ENCODE measurements at regions of chr19 and their contacts with region 1.

Region 1: GRCh38 chr19:2983351-2984195 is 6.2 kb downstream of the TLE6 start:
- DNase-seq: peak; percentile 86
- H3K4me3 ChIP-seq: peak overlapping the region; percentile 16 to 52 (median 44)
- H3K27ac ChIP-seq: peak overlapping the region; percentile 85 to 87 (median 86)
- H3K4me1 ChIP-seq: peaks cover 0 to 26% (median 23%) of the 10 kb centered on the region in 4 donors
- H3K27me3 ChIP-seq: no peaks in the 10 kb centered on the region
- CTCF ChIP-seq: no peak
- EP300 ChIP-seq: no peak
- POLR2A ChIP-seq: no peak

Region 2: GRCh38 chr19:3047425-3048189 is 64.0 kb after region 1 on chr19:
- intact Hi-C with region 1: loop called (anchors 5 kb)
- DNase-seq: peak; percentile 97
- H3K4me3 ChIP-seq: peak overlapping the region; percentile 44 to 76 (median 57)
- H3K27ac ChIP-seq: peak overlapping the region; percentile 81 to 98 (median 94)
- H3K4me1 ChIP-seq: peaks cover 0 to 24% (median 21%) of the 10 kb centered on the region in 4 donors
- H3K27me3 ChIP-seq: no peaks in the 10 kb centered on the region
- CTCF ChIP-seq: no peak
- EP300 ChIP-seq: no peak
- POLR2A ChIP-seq: peak in 1 of 2 donors; percentile 22